ENCODE measurements at regions of chr7 and their contacts with region 1.

Region 1: GRCh38 chr7:105336009-105336408 is 52.7 kb downstream of the SRPK2 start:
- DNase-seq: no peak

Region 2: DNA sequence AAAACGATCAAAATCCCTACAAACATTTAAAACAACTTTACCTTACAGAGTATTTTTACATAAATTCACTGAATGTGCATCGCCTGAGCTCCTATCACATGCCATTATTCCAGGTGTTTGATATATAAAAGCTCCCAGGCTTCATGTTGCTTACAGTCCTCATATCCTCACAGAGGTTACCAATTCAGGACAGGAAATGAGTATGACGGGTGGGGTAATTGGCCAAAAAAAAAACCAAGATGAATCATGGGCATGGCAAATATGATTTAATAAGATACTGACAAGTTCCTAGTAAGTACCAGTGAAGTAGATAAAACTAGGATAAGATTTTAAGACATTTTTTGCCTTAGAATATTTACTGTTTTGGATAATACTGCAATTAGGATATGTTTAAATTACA is 186.2 kb before region 1 on chr7:
- intact Hi-C with region 1: loop called (anchors 5 kb)
- DNase-seq: no peak

Region 3: GRCh38 chr7:105238198-105238765 is 97.7 kb before region 1 on chr7:
- intact Hi-C with region 1: no loop called
- DNase-seq: no peak

Region 4: DNA sequence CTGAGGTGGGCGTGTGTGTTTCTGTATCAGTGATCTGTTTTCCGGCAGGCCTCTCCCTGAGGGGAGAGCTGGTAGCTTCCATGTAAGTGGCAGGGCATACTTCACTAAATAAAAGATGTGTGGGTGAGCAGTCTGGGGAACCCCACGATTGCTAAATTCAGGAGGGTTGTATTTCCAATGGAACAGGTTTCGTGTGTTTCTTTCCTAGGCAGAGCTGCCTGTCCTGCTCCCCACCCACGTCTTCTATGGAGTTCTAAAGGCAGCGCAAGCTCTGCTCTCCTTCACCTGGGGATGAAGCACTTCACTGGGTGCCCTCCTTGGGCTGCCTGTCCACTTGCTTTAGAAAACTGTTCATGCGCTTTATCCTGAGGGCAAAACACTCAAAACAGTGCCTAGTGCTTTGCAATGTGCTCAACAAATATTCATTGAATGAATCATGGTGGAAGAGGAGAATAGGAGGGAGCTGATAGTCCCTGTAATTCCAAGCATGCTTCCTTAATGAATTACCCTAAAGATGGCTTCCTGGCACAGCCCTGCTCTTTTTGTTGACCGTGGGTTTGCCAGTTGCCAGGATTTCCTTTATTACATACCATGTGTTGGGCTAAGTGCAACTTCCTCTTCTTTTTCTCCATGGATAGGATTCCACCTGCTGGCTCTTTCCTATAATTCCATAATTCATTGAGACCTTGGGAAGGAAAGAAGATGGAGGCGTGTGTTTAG is 103.3 kb after region 1 on chr7:
- intact Hi-C with region 1: no loop called
- DNase-seq: no peak

Measured in head of caudate nucleus (tissue), 42 donors.